Activated B cell treated with CpG ODN at 0.5 μM for 24 hours (primary cell): ENCODE measurements at regions of chr6 and their contacts with region 1.

Region 1: DNA sequence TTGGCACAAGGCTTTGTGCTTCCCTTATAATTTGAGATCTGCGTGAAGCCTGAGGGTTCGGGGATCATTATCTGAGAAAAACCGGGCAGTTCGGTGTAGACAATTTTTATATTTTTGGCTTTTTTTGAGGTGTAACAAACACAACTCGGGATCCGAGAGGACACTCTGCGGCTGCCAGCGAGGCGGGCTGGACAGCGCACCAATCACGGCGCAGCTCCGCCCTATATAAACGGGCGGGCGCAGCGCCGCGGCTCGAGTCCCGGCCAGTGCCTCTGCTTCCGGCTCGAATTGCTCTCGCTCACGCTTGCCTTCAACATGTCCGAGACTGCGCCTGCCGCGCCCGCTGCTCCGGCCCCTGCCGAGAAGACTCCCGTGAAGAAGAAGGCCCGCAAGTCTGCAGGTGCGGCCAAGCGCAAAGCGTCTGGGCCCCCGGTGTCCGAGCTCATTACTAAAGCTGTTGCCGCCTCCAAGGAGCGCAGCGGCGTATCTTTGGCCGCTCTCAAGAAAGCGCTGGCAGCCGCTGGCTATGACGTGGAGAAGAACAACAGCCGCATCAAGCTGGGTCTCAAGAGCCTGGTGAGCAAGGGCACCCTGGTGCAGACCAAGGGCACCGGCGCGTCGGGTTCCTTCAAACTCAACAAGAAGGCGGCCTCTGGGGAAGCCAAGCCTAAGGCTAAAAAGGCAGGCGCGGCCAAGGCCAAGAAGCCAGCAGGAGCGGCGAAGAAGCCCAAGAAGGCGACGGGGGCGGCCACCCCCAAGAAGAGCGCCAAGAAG is 69.0 kb downstream of the HFE start:
- DNase-seq: peak; percentile 87
- ATAC-seq: peak; percentile 59
- H3K4me3 Mint-ChIP-seq: peak overlapping the region; percentile 88
- H3K27ac Mint-ChIP-seq: peak overlapping the region; percentile 99
- H3K4me1 Mint-ChIP-seq: peaks cover 45% of the 10 kb centered on the region
- H3K27me3 Mint-ChIP-seq: no peaks in the 10 kb centered on the region
- CTCF ChIP-seq: no peak

Region 2: GRCh38 chr6:26065952-26066380 is 90.3 kb before region 1 on chr6:
- CTCF ChIA-PET with region 1: interaction called, 3 read pairs
- POLR2A ChIA-PET with region 1: interaction called, 16 read pairs
- intact Hi-C with region 1: no loop called
- DNase-seq: no peak
- ATAC-seq: peak; percentile 97
- H3K4me3 Mint-ChIP-seq: no peak overlapping the region
- H3K27ac Mint-ChIP-seq: peak overlapping the region; percentile 35
- H3K4me1 Mint-ChIP-seq: peaks cover 8% of the 10 kb centered on the region
- H3K27me3 Mint-ChIP-seq: peaks cover 3% of the 10 kb centered on the region
- CTCF ChIP-seq: peak; percentile 39

Region 3: GRCh38 chr6:26141378-26141904 is 14.8 kb before region 1 on chr6:
- CTCF ChIA-PET with region 1: no interaction called
- POLR2A ChIA-PET with region 1: interaction called, 25 read pairs
- intact Hi-C with region 1: no loop called
- DNase-seq: no peak
- ATAC-seq: no peak
- H3K4me3 Mint-ChIP-seq: no peak overlapping the region
- H3K27ac Mint-ChIP-seq: no peak overlapping the region
- H3K4me1 Mint-ChIP-seq: peaks cover 7% of the 10 kb centered on the region
- H3K27me3 Mint-ChIP-seq: no peaks in the 10 kb centered on the region
- CTCF ChIP-seq: no peak

Region 4: GRCh38 chr6:26234421-26235296 is 78.4 kb after region 1 on chr6:
- CTCF ChIA-PET with region 1: no interaction called
- POLR2A ChIA-PET with region 1: interaction called, 146 read pairs
- intact Hi-C with region 1: no loop called
- DNase-seq: peak; percentile 49
- ATAC-seq: peak; percentile 77
- H3K4me3 Mint-ChIP-seq: peak overlapping the region; percentile 89
- H3K27ac Mint-ChIP-seq: peak overlapping the region; percentile 97
- H3K4me1 Mint-ChIP-seq: peaks cover 26% of the 10 kb centered on the region
- H3K27me3 Mint-ChIP-seq: no peaks in the 10 kb centered on the region
- CTCF ChIP-seq: no peak

Region 5: DNA sequence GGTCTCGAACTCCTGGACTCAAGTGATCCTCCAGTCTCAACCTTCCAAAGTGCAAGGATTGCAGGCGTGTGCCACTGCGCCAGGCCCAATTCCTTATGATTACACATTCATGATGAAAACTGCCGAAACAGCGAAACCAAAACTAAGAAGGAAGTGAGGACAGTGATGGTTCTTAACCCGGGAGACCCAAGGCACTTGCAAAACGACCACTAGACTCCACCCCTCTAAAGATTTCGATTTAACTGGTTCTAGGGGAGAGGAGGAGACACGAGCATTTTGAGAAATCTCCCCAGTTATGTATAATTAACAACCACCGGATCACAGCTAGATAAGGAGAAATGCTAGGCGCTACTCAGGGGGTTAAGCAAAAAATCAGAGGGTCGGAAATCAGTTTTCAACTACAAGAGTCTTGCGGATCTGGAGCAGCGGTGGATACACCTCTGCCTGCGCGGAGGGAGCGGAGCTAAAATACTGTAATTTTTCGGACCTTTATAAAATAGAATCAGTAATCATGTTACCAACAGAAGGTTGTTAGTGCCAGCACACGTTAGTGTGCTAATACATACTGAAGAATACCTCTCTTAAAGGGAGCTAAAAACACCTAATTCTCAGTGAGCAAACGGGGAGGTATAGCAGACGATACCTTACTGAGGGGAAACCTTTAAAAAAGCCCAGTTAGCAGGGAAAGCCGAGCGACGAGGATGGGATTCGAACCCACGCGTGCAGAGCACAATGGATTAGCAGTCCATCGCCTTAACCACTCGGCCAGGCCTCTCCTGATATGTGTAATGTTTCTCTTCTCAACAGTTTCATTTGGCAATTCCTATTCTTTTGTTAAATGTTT is 148.8 kb after region 1 on chr6:
- CTCF ChIA-PET with region 1: no interaction called
- POLR2A ChIA-PET with region 1: no interaction called
- intact Hi-C with region 1: no loop called
- DNase-seq: peak; percentile 39
- ATAC-seq: peak; percentile 87
- H3K4me3 Mint-ChIP-seq: peak overlapping the region; percentile 93
- H3K27ac Mint-ChIP-seq: peak overlapping the region; percentile 96
- H3K4me1 Mint-ChIP-seq: peaks cover 17% of the 10 kb centered on the region
- H3K27me3 Mint-ChIP-seq: no peaks in the 10 kb centered on the region
- CTCF ChIP-seq: no peak

Region 6: DNA sequence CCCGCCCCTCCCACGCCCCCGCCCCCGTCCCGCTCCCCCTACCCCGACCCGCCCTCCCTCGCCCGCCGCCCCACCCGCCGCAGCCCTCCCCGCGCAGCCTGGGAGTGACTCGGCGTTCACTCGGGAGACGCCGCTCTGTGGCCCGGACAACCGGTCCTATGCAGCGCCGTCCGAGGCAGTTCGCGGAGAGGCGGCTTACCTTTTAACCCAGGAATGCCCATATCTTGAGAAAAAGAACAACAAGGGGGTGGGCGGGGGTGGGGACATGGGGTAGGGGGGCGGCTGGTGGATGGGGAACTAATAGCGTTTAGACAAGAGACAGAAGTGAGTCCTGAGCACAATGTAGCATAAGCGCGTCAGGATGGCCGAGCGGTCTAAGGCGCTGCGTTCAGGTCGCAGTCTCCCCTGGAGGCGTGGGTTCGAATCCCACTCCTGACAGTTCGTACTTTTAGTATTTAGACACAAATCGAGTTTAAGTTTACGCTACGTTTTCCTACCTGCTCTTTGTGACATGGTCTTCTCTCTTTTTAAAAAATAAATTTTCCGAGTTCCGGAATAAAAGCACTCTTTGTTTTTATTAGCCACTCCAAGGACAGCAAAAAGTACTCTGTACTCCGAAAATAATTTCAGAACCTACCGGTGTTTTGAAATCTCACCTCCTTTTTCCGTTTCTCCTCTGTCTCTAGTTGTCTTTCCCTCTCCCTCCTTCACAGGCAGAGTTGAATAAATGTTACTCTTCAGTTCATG is 364.8 kb after region 1 on chr6:
- CTCF ChIA-PET with region 1: no interaction called
- POLR2A ChIA-PET with region 1: interaction called, 11 read pairs
- intact Hi-C with region 1: no loop called
- DNase-seq: peak; percentile 78
- ATAC-seq: peak; percentile 72
- H3K4me3 Mint-ChIP-seq: peak overlapping the region; percentile 87
- H3K27ac Mint-ChIP-seq: peak overlapping the region; percentile 92
- H3K4me1 Mint-ChIP-seq: peaks cover 43% of the 10 kb centered on the region
- H3K27me3 Mint-ChIP-seq: peaks cover 1% of the 10 kb centered on the region
- CTCF ChIP-seq: no peak

Region 7: DNA sequence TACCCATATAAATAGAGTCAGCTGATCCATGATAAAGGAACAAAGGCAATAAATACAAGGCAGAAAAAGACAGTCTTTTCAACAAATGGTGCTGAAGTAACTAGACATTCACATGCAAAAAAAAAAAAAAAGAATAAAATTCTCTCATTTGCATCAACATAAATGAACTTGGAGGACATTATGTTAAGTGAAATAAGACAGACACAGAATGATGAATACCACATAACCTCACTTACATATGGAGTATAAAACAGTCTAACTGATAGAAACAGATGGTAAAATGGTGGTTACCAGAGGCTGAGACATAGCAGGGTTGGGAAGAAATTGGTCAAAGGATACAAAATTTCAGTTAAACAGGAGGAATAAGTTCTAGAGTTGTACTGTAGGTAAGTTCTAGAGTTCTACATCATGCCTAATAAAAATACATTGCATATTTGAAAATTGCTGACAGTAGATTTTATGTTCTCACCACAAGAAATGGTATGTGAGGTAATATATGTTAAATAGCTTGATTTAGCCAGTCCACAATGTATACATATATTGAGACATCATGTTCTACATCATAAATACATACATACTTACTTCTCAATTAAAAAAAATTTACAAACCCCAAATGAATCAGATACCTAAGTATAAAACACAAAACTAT is 495.0 kb after region 1 on chr6:
- CTCF ChIA-PET with region 1: no interaction called
- POLR2A ChIA-PET with region 1: no interaction called
- intact Hi-C with region 1: no loop called
- DNase-seq: no peak
- ATAC-seq: no peak
- H3K4me3 Mint-ChIP-seq: no peak overlapping the region
- H3K27ac Mint-ChIP-seq: no peak overlapping the region
- H3K4me1 Mint-ChIP-seq: peaks cover 6% of the 10 kb centered on the region
- H3K27me3 Mint-ChIP-seq: no peaks in the 10 kb centered on the region
- CTCF ChIP-seq: no peak

Region 8: GRCh38 chr6:27825025-27825793 is 1668.9 kb after region 1 on chr6:
- CTCF ChIA-PET with region 1: no interaction called
- POLR2A ChIA-PET with region 1: interaction called, 12 read pairs
- intact Hi-C with region 1: no loop called
- DNase-seq: no peak
- ATAC-seq: no peak
- H3K4me3 Mint-ChIP-seq: peak overlapping the region; percentile 96
- H3K27ac Mint-ChIP-seq: peak overlapping the region; percentile 99
- H3K4me1 Mint-ChIP-seq: peaks cover 31% of the 10 kb centered on the region
- H3K27me3 Mint-ChIP-seq: no peaks in the 10 kb centered on the region
- CTCF ChIP-seq: no peak